ENCODE measurements at regions of chr15 and their contacts with region 1.

Region 1: GRCh38 chr15:92917606-92918407 is 17.7 kb downstream of the CHD2 start:
- DNase-seq: peak; percentile 90
- ATAC-seq: peak; percentile 50
- H3K4me3 ChIP-seq: no peak overlapping the region
- H3K27ac ChIP-seq: peak overlapping the region; percentile 87
- H3K4me1 ChIP-seq: peaks cover 64 to 94% of the 10 kb centered on the region in 2 experiments
- H3K27me3 ChIP-seq: no peaks in the 10 kb centered on the region
- CTCF ChIP-seq: peak; percentile 77 to 93 (median 78)
- POLR2A ChIP-seq: no peak
- RAD21 ChIP-seq: peak; percentile 93

Region 2: DNA sequence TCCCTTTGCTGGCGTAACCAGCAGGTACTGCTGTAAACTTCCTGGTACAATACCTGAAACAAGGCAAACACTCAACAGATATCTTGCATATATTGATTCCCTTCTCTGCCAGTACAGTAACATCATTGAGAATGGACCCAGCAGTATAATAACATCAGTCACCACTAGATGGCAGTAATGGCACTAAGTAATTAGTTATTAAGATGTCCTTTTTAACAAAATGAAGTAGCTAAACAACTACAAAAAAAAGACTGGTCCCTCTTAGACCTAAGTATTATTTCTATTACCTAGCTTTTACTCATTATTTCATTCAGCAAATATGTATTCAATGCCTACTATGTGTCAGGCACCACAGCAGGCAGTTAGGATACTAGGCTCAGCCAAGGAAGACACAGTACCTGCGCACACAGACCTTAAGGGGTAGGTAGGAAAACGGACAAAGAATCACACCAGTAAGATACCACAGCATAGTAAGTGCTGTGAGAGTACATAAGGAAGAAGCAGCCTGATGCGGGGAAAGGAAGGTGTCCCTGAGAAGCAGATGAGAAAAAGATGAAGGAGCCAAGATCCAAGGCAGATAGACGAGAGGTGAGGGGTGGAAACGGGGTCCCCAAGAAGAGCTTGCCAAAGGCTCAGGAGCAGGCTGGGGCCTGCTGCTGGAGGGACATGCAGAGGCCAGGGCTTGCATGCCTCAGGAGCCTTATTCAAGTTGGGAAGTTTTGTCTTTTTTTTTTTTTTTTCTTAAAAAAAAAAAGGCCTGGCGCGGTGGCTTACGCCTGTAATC is 120.4 kb before region 1 on chr15:
- CTCF ChIA-PET with region 1: interaction called, 67 read pairs
- POLR2A ChIA-PET with region 1: interaction called, 12 read pairs
- RAD21 ChIA-PET with region 1: interaction called, 3 to 5 read pairs
- intact Hi-C with region 1: loop called (anchors 1 kb)
- DNase-seq: peak; percentile 73
- ATAC-seq: peak; percentile 54
- H3K4me3 ChIP-seq: no peak overlapping the region
- H3K27ac ChIP-seq: 0 out of 2 replicates have a peak overlapping the region, but pooled peaks have one; percentile 1
- H3K4me1 ChIP-seq: peaks cover 27 to 45% of the 10 kb centered on the region in 2 experiments
- H3K27me3 ChIP-seq: no peaks in the 10 kb centered on the region
- CTCF ChIP-seq: peak in 2 of 3 experiments; percentile 59 to 81; a peak in 4 of 6 replicates
- POLR2A ChIP-seq: no peak
- RAD21 ChIP-seq: no peak

Region 3: DNA sequence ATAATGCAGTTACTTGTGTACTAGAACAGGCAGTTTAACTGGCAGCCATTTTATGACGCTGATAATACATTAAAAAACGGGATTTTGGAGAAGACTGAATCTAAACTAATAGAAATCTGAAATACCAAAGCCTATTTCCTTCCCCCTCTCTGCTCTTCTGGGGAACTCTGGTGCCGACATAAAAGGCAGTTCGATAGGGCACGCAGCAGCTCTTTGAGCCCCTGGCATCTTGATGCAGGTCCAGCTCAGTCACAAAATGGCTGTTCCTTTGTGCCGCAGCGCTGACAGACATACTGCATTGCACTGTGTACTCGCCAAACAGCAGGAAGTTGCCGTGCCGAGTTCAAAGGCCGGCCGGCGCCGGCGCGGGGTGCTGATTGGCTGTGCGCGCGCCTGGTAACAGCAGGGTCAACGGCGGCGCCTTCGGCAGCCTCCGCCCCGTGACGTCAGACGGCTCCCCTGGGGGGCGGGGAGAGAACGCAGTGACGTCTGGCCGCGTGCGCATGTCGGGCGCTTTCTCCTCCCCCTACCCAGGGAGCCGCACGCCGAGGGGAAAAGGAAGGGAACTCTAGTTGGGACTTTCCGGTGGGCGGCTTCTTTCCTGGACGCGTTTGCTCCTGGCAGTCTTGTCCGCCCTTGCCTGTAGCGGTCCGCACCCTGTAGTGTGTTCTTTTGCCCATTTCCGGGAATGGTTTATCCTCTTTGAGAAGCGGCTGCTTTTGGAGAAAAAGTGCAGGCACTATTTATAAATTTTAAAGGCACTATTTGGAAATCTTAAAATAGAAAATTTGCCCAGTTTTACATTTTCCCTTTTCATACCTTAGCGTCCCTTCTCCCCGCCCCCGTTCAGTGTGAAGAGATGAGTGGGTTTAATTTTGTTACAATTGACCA is 13.6 kb before region 1 on chr15:
- CTCF ChIA-PET with region 1: interaction called, 11 read pairs
- POLR2A ChIA-PET with region 1: interaction called, 13 read pairs
- RAD21 ChIA-PET with region 1: interaction called, 3 read pairs
- intact Hi-C with region 1: no loop called
- DNase-seq: peak; percentile 96
- ATAC-seq: peak; percentile 86
- H3K4me3 ChIP-seq: peak overlapping the region; percentile 69 to 72
- H3K27ac ChIP-seq: peak overlapping the region; percentile 97
- H3K4me1 ChIP-seq: peaks cover 48 to 70% of the 10 kb centered on the region in 2 experiments
- H3K27me3 ChIP-seq: no peaks in the 10 kb centered on the region
- CTCF ChIP-seq: no peak
- POLR2A ChIP-seq: peak; percentile 37
- RAD21 ChIP-seq: 0 out of 2 replicates have a peak, but pooled peaks have one; percentile 21

Measured in HCT116 (cell line).